MCF 10A (cell line): ENCODE measurements at regions of chr2 and their contacts with region 1.

Region 1: DNA sequence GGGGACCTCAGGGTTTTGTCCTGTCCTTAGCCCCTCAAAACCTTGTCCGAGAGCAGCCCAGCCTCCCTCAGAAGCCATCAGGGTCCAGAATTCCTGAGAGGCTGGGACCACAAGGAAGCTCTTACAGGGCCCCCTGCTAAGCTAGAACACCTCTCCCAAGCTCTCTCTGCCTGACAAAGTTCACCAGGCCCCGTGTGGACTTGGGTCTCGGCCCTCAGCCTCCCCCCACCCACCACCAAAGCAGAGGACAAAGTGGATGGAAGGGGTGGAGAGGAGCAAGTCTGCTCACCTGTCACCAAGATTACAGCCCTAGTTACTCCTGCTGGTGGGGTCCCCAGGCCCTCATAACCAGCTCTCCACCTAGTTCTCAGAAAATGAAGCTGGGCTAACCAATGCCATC is 16.8 kb downstream of the RAB11FIP5 start:
- DNase-seq: no peak
- H3K4me3 Mint-ChIP-seq: no peak overlapping the region
- H3K27ac Mint-ChIP-seq: no peak overlapping the region
- H3K4me1 Mint-ChIP-seq: peaks cover 13% of the 10 kb centered on the region
- H3K27me3 Mint-ChIP-seq: no peaks in the 10 kb centered on the region
- CTCF ChIP-seq: no peak

Region 2: DNA sequence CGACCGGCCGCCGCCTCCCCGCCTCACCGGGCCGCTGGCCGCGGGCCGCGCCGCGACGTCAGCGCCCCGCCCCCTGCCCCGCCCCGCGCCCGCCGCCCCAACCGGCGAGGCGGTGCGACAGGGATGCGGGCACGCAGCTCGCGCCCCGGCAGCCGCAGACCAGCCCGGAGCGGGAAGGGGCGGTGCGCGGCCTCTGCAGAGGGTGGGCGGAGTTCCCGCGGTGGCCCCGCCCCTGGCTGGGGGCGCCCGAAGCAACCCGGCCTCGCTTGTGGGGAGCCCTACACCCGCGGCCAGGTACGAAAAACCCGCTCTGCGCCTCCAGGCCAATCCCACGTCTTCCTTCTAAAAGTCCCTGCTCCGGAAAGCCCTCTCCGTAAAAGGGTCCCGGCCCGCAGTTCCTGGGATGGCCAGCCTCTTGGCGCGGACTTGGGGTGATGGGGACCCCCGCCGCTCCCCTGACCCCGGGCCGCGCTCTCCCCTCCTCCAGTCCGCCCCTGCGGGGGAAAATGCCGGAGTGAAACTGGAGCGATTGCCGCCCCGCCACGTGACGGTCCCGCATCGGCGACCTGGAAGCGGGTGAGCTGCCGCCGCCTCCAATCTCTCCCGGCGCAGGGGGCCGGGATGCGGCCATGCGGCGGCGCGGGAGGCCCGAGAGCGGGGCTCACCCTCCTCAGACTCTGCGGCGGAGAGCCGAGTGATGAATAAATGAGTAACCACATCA is 17.2 kb after region 1 on chr2 and contains the start of gene RAB11FIP5:
- CTCF ChIA-PET with region 1: interaction called, 3 read pairs
- POLR2A ChIA-PET with region 1: interaction called, 11 read pairs
- intact Hi-C with region 1: no loop called
- DNase-seq: peak; percentile 75
- H3K4me3 Mint-ChIP-seq: peak within 1 kb of the TSS; percentile 96
- H3K27ac Mint-ChIP-seq: peak within 1 kb of the TSS; percentile 89
- H3K4me1 Mint-ChIP-seq: peaks cover 20% of the 10 kb centered on the region
- H3K27me3 Mint-ChIP-seq: no peaks in the 10 kb centered on the region
- CTCF ChIP-seq: no peak
- total RNA-seq, gene RAB11FIP5: 35.6 and 36.9 TPM in 2 replicates

Region 3: GRCh38 chr2:73134471-73134870 is 38.6 kb after region 1 on chr2:
- CTCF ChIA-PET with region 1: no interaction called
- POLR2A ChIA-PET with region 1: no interaction called
- intact Hi-C with region 1: no loop called
- DNase-seq: no peak
- H3K4me3 Mint-ChIP-seq: no peak overlapping the region
- H3K27ac Mint-ChIP-seq: no peak overlapping the region
- H3K4me1 Mint-ChIP-seq: no peaks in the 10 kb centered on the region
- H3K27me3 Mint-ChIP-seq: peaks cover 19% of the 10 kb centered on the region
- CTCF ChIP-seq: no peak